ENCODE measurements at regions of chr9 and their contacts with region 1.

Region 1: GRCh38 chr9:14156046-14156445 is 157.9 kb downstream of the NFIB start:
- DNase-seq: no peak
- H3K4me3 ChIP-seq: no peak overlapping the region
- H3K27ac ChIP-seq: peak overlapping the region; percentile 77
- H3K4me1 ChIP-seq: peaks cover 62% of the 10 kb centered on the region
- H3K27me3 ChIP-seq: no peaks in the 10 kb centered on the region
- CTCF ChIP-seq: no peak
- POLR2A ChIP-seq: no peak

Region 2: GRCh38 chr9:14193328-14193990 is 37.4 kb after region 1 on chr9:
- CTCF ChIA-PET with region 1: no interaction called
- POLR2A ChIA-PET with region 1: no interaction called
- dilution Hi-C with region 1: no loop called
- intact Hi-C with region 1: loop called (anchors 1 kb)
- DNase-seq: peak; percentile 90
- H3K4me3 ChIP-seq: peak overlapping the region in 2 of 3 experiments; percentile 21 to 55
- H3K27ac ChIP-seq: peak overlapping the region; percentile 97
- H3K4me1 ChIP-seq: peaks cover 64% of the 10 kb centered on the region
- H3K27me3 ChIP-seq: no peaks in the 10 kb centered on the region
- CTCF ChIP-seq: no peak
- POLR2A ChIP-seq: no peak

Region 3: DNA sequence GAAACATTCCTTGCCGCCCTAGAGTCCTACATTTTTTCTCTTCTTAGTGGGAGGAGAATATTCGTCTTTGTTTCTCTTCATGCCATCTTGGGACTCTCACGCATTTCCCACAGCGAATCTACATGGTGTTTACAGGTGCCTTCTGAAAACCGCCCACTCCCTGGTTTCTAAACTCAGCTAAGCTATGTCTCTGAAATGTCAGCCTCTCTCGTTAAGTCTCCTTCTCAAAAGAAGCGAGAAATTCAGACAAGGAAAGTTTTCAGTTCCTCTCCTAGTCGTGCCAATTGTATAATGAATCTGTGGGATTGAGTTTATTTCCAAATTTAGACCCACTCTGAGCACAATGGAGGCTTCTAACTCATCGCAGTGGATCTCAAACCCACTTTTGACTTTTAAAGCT is 344.7 kb after region 1 on chr9:
- CTCF ChIA-PET with region 1: no interaction called
- POLR2A ChIA-PET with region 1: no interaction called
- dilution Hi-C with region 1: no loop called
- intact Hi-C with region 1: no loop called
- DNase-seq: no peak
- H3K4me3 ChIP-seq: no peak overlapping the region
- H3K27ac ChIP-seq: no peak overlapping the region
- H3K4me1 ChIP-seq: no peaks in the 10 kb centered on the region
- H3K27me3 ChIP-seq: peaks cover 22 to 27% of the 10 kb centered on the region in 2 experiments
- CTCF ChIP-seq: no peak
- POLR2A ChIP-seq: no peak